Esophagus muscularis mucosa (tissue), 4 donors: ENCODE measurements at regions of chr17 and their contacts with region 1.

Region 1: DNA sequence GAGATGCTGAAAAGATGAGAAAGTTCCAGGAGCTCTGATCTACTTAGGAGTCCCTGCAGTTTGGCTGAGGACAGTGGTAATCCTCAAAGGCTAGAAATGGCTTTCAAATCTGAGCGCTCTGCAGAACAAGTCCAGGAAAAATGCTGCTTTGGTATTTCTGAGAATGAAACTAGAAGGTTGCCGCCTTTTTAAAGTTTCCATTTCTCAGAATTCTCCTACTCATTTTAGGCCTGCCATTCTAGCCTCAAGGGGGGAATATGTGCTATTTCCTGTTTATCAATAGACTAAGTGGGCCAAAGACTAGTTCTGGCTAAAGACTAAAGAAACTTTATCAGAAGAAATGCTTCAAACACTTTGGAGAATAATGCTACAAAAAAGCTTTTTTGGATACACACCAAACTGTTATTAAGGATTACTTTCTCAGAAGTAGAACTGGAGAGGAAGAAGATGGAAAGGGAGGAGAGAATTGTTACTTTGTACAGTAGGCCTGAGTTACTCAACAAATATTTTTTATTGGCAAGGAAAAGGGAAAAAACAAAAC is at the start of gene SLFN12L:
- DNase-seq: no peak
- H3K4me3 ChIP-seq: no peak within 1 kb of the TSS
- H3K27ac ChIP-seq: peak within 1 kb of the TSS; percentile 9 to 48 (median 22)
- H3K4me1 ChIP-seq: peaks cover 0 to 17% (median 12%) of the 10 kb centered on the region in 4 donors
- H3K27me3 ChIP-seq: peaks cover 0 to 12% (median 0%) of the 10 kb centered on the region in 4 donors
- CTCF ChIP-seq: no peak
- EP300 ChIP-seq: no peak
- POLR2A ChIP-seq: no peak
- total RNA-seq, gene SLFN12L: 0.32 to 1.7 (median 1.0) TPM

Region 2: DNA sequence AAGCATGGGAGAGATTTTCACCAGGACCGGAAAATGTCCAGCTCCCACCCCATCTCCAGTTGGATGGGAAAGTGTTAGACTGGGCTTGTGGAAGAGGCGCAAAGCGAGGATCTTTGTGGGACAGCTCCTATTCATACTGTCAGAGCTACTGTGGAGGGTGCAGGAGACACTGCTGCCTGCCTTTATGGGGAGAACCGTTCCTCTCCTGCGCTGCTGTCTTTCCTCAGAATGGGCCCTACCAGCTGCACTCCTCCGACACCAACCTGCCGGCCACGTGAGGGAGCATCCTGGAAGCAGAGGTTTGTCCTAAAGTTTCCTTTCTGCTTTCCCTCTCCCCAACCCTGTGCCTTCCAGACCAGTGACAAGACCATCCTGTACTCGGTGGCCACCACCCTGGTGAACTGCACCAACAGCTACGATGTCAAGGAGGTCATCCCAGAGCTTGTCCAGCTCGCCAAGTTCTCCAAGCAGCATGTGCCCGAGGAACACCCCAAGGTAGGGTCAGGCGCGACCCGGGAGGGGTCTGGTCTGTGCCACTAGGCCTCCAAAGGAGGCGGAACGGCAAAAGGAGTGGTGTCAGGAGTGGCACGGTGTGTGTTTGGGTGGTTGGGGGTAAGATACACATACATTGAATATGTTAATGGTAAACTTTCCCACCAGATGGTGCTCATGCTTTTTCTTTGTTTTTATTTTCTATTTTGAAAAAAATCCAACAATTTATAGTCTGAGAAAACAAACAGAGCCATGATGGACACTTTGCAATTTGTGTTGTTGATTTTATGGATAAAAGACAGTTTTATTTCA is 366.5 kb before region 1 on chr17:
- intact Hi-C with region 1: loop called (anchors 5 kb)
- DNase-seq: no peak
- H3K4me3 ChIP-seq: no peak overlapping the region
- H3K27ac ChIP-seq: no peak overlapping the region
- H3K4me1 ChIP-seq: no peaks in the 10 kb centered on the region
- H3K27me3 ChIP-seq: peaks cover 0 to 15% (median 0%) of the 10 kb centered on the region in 4 donors
- CTCF ChIP-seq: peak in 2 of 3 experiments; percentile 23 to 32
- EP300 ChIP-seq: no peak
- POLR2A ChIP-seq: no peak

Region 3: DNA sequence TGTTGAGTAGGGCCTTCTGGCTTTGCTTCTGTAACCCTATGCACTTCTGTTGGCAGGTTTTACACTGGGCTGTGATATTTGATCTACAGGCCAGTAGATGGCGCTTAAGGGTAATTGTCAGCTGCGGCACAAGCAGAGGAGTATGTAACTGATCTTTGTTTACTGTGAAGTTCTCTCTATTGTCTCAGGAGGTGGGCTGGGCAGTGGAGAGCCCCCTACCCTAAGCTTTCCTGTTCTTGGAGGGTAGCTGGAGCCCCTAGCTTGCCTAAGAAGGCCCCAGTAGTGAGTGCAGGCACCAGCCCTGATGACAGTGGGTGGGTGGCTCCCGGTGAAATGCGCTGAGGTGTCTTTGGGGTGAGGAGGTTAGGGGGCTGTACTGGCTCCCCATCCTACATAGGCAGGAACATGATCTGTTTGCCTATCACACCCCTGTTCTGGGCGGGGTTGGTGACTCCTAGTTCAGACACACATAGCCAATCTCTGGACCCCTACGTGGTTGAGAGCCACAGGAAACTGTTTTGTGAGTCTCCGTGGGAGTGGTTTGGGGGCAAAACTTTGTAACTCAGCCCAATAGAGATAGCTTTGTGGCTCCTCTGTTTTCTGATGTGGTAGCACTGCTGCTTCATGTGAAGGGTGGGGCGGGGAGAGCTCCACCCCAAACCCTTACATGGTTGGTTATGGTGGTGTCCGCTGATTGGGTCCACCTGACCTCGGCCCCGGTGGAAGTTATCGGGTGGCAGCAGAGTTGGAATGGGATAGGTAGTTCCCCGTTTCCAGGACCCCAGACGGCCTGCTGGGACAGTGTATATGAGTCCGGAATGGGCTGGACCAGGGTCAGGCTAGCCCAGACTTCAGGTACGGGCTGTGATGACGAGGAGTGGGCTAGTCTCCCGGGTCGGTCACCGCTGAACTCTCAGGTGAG is 224.6 kb before region 1 on chr17:
- intact Hi-C with region 1: loop called (anchors 2 kb)
- DNase-seq: no peak
- H3K4me3 ChIP-seq: peak overlapping the region; percentile 41 to 51 (median 44)
- H3K27ac ChIP-seq: peak overlapping the region; percentile 2 to 47 (median 34)
- H3K4me1 ChIP-seq: peaks cover 28 to 35% (median 31%) of the 10 kb centered on the region in 4 donors
- H3K27me3 ChIP-seq: peaks cover 0 to 18% (median 0%) of the 10 kb centered on the region in 4 donors
- CTCF ChIP-seq: peak; percentile 65 to 84 (median 81)
- EP300 ChIP-seq: no peak
- POLR2A ChIP-seq: no peak

Region 4: DNA sequence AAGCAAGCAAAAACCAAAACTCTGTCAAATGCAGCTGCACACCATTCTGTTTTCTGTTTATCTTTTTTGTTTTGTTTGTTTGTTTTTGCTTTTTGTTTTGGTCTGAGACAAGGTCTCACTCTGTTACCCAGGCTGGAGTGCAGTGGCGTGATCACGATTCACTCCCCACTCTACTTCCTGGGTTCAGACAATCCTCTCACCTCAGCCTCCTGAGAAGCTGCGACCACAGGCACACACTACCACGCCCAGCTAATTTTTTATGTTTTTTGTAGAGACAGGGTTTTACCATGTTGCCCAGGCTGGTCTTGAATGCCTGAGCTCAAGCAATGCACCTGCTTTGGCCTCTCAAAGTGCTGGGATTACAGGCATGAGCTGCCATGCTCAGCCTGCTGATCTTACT is 69.8 kb before region 1 on chr17:
- intact Hi-C with region 1: no loop called
- DNase-seq: no peak
- H3K4me3 ChIP-seq: no peak overlapping the region
- H3K27ac ChIP-seq: no peak overlapping the region
- H3K4me1 ChIP-seq: no peaks in the 10 kb centered on the region
- H3K27me3 ChIP-seq: peaks cover 0 to 25% (median 0%) of the 10 kb centered on the region in 4 donors
- CTCF ChIP-seq: no peak
- EP300 ChIP-seq: no peak
- POLR2A ChIP-seq: no peak